Endothelial cell of umbilical vein (primary cell): ENCODE measurements at regions of chr1 and their contacts with region 1.

Region 1: GRCh38 chr1:246608616-246609376 is 42.5 kb downstream of the CNST start:
- DNase-seq: peak; percentile 99
- H3K4me3 ChIP-seq: no peak overlapping the region
- H3K27ac ChIP-seq: peak overlapping the region; percentile 91
- H3K4me1 ChIP-seq: peaks cover 20% of the 10 kb centered on the region
- H3K27me3 ChIP-seq: no peaks in the 10 kb centered on the region
- CTCF ChIP-seq: peak in 1 of 2 donors; percentile 37
- POLR2A ChIP-seq: peak; percentile 27

Region 2: DNA sequence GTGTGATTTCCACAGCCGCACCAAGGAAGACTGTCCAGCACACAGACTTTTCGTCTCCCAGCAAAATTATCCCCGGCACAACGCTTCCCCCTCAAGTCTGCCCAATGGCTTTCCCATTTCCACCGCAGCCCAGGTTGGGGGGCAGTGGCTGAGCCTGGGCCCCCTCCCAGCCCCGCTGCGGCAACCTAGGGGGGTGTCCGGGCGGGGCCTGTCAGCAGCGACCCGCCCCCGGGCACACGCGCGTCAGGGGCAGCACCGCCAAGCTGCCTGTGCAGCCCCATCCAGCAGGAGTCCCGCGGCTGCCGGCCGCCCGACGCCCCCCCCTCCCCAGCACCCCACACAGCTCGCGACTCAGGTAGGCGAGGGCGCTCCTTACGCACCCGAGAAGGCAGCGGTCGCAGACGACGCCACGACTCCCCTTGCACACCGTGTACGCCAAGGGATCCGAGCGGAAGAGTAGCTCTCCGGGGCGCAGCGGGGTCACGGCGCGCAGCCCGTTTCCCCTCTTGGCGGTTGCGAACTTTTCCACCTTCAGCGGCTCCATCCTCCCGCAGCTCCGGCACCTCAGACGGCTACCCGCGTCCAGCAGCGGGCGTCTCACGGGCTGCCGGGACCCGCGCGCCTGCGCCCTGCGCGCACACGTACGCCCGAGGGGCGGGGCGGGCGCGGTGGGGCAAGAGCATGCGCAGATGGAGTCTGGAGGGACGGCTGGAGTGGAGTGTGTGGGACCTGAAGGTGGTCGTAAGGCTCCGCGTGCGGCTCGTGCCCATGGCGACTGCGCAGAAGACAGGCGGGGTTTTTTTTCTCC is 101.9 kb before region 1 on chr1 and contains the start of gene SMYD3:
- CTCF ChIA-PET with region 1: no interaction called
- POLR2A ChIA-PET with region 1: no interaction called
- dilution Hi-C with region 1: no loop called
- intact Hi-C with region 1: loop called (anchors 1 kb)
- DNase-seq: peak; percentile 90
- H3K4me3 ChIP-seq: peak within 1 kb of the TSS; percentile 35 to 80 (median 45)
- H3K27ac ChIP-seq: no peak within 1 kb of the TSS
- H3K4me1 ChIP-seq: peaks cover 14% of the 10 kb centered on the region
- H3K27me3 ChIP-seq: no peaks in the 10 kb centered on the region
- CTCF ChIP-seq: peak in 1 of 2 donors; percentile 9
- POLR2A ChIP-seq: peak; percentile 69
- total RNA-seq, gene SMYD3: 27.6 and 32.1 TPM in 2 replicates

Region 3: DNA sequence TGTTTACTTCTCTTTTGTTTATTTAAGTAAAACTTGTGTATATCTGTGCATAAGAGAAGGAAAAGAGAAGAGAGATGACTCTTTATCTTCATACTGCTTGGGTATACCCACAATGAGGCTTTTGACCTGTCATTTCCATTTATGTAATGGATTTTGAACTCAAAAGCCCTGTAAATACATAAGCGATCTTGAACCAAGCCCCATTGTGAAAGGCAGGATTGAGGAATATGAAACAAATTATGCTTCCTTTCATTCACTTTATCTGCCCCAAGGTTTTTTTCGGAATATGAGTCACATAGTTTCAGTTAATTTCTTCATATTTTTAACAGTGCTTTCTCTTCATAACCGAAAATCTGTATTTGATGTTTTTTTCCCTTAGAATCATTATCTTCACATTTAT is 21.2 kb before region 1 on chr1:
- CTCF ChIA-PET with region 1: interaction called, 4 read pairs
- POLR2A ChIA-PET with region 1: no interaction called
- dilution Hi-C with region 1: no loop called
- intact Hi-C with region 1: loop called (anchors 1 kb)
- DNase-seq: peak; percentile 84
- H3K4me3 ChIP-seq: peak overlapping the region in 1 of 3 experiments; percentile 40
- H3K27ac ChIP-seq: peak overlapping the region; percentile 91
- H3K4me1 ChIP-seq: peaks cover 24% of the 10 kb centered on the region
- H3K27me3 ChIP-seq: no peaks in the 10 kb centered on the region
- CTCF ChIP-seq: no peak
- POLR2A ChIP-seq: no peak

Region 4: GRCh38 chr1:246629030-246629429 is 20.2 kb after region 1 on chr1:
- CTCF ChIA-PET with region 1: interaction called, 11 read pairs
- POLR2A ChIA-PET with region 1: no interaction called
- dilution Hi-C with region 1: no loop called
- intact Hi-C with region 1: no loop called
- DNase-seq: no peak
- H3K4me3 ChIP-seq: no peak overlapping the region
- H3K27ac ChIP-seq: no peak overlapping the region
- H3K4me1 ChIP-seq: no peaks in the 10 kb centered on the region
- H3K27me3 ChIP-seq: no peaks in the 10 kb centered on the region
- CTCF ChIP-seq: no peak
- POLR2A ChIP-seq: no peak

Region 5: GRCh38 chr1:246689409-246690008 is 80.7 kb after region 1 on chr1:
- CTCF ChIA-PET with region 1: interaction called, 11 read pairs
- POLR2A ChIA-PET with region 1: no interaction called
- dilution Hi-C with region 1: no loop called
- intact Hi-C with region 1: no loop called
- DNase-seq: peak; percentile 71
- H3K4me3 ChIP-seq: peak overlapping the region in 1 of 3 experiments; percentile 5
- H3K27ac ChIP-seq: no peak overlapping the region
- H3K4me1 ChIP-seq: no peaks in the 10 kb centered on the region
- H3K27me3 ChIP-seq: no peaks in the 10 kb centered on the region
- CTCF ChIP-seq: peak; percentile 75 to 81
- POLR2A ChIP-seq: no peak

Region 6: DNA sequence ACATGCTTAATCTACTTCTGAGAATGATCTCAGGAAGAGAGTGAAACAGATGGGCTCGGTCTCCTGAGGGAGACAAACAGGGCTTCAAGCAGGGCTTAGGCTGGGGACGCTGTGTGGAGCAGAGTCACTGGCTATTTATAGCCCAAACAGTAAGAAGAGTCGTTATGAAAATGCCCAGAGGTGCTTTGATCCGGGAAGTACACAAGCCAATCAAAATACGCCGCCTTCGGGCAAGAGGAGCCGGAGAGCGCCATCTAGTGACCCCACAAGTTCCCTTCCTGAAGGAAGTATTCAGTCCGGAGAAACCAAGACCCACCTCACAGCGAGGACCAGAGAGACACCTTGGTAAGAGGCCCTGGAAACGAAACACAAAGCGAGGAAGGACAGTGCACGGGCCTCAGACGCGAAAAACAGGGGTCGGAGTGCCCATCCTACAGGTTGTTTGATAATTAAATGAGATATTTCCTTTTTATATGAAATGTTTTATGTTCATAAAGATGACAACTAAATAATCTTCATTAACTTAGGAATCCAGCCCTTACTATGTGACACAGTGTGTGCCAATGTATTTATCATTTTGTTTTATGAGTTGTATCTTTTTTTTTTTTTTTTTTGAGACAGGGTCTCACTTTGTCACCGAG is 90.4 kb after region 1 on chr1:
- CTCF ChIA-PET with region 1: no interaction called
- POLR2A ChIA-PET with region 1: no interaction called
- dilution Hi-C with region 1: no loop called
- intact Hi-C with region 1: loop called (anchors 2 kb)
- DNase-seq: peak; percentile 93
- H3K4me3 ChIP-seq: no peak overlapping the region
- H3K27ac ChIP-seq: peak overlapping the region; percentile 53
- H3K4me1 ChIP-seq: peaks cover 5% of the 10 kb centered on the region
- H3K27me3 ChIP-seq: no peaks in the 10 kb centered on the region
- CTCF ChIP-seq: peak; percentile 91 to 92
- POLR2A ChIP-seq: no peak

Region 7: DNA sequence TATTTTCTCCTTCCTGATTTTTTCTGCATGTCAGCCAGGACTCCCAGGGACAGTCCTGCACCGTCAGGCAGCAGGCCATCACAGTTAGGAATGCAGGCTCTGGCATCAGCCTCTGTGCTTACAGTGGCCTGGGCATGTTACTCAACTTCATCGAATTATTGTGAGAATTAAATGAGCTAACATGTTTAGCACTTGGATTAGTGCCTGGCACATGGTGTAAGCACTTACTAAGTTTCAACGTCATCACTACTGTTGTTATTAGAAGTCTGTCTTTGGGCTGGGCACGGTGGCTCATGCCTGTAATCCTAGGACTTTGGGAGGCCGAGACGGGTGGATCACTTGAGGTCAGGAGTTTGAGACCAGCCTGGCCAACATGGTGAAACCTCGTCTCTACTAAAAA is 160.5 kb after region 1 on chr1:
- CTCF ChIA-PET with region 1: no interaction called
- POLR2A ChIA-PET with region 1: no interaction called
- dilution Hi-C with region 1: no loop called
- intact Hi-C with region 1: no loop called
- DNase-seq: no peak
- H3K4me3 ChIP-seq: no peak overlapping the region
- H3K27ac ChIP-seq: no peak overlapping the region
- H3K4me1 ChIP-seq: no peaks in the 10 kb centered on the region
- H3K27me3 ChIP-seq: no peaks in the 10 kb centered on the region
- CTCF ChIP-seq: no peak
- POLR2A ChIP-seq: no peak